ENCODE measurements at regions of chr14 and their contacts with region 1.

Region 1: DNA sequence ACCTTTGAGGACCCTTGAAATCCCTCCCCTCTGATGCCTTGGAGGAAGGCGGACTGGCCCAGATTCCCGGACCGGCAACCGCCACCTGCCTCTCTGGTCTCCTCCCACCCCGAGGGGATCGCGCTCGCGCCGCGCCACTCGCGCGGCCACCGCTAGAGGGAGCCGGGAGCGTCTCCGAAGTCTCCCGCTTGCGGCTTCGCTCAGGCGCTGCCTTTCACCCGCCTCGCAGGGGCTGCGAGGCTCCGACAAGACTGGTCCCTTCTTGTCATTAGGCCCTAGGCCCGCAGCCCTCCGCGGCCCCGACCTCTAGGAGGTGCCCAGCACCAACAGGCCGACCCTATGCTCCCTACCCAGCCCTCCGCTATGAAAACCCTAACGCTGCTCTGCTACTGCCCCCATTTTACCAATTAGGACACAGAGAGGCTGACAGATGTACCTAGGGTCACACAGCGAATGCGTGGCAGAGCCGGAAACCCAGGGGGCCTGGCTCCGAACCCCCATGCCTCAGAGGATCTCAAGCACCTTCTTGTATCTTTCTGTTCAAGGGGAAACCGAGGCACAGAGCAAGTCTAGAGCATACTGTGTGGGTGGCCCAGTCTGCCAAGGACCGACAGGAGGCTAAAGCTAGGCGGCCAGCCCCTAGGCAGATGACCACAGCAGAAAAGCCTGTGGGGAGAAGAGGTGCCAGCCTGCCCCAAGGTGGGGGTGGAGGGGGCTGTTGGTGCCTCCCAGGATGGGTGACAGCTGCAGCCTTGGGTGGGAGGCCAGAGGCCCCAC is 21.4 kb upstream of the VSX2 start:
- DNase-seq: peak; percentile 65
- H3K4me3 ChIP-seq: no peak overlapping the region
- H3K27ac ChIP-seq: no peak overlapping the region
- H3K4me1 ChIP-seq: no peaks in the 10 kb centered on the region
- H3K27me3 ChIP-seq: peaks cover 10 to 17% of the 10 kb centered on the region in 2 experiments
- CTCF ChIP-seq: peak; percentile 95 to 100
- POLR2A ChIP-seq: no peak

Region 2: DNA sequence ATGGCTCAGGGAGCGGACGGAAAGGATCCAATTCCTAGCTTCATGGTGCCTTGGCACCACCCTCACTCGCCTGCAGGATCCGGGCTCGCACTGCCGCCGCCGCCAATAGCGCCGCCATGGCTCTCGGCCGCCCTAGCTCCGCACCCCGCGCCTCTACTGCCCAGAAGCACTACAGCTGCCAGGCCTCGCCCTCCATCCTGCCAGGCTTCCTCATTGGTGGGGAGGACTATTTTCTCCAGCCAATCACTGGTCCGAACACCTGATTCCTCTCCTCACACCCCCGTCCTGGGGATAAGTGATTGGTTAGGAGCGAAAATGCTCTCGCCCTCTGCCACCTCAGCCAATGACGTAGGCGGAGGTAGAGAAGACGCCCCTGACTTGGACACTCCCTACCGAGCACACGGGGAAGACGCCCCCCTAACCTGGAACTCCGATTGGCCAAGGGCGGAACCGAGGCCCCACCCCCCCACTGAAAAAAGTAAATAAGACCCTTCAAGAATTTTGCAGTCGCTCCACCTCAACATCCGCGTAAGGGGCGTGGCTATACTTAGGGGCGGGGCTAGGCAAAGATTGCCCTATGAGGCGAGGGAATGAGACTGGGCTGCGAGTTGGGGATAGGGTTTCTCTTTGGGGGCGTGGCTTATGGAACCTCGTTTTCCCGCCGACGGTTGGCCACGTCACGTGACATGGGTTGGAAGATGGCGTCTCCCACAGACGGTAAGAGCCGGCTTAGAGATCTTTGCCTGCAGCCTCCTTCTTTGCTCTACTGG is 133.4 kb before region 1 on chr14 and contains the starts of genes ALDH6A1 and LIN52:
- CTCF ChIA-PET with region 1: no interaction called
- POLR2A ChIA-PET with region 1: no interaction called
- dilution Hi-C with region 1: no loop called
- intact Hi-C with region 1: no loop called
- DNase-seq: peak; percentile 100
- H3K4me3 ChIP-seq: peak within 1 kb of the TSS; percentile 34 to 87 (median 73)
- H3K27ac ChIP-seq: peak within 1 kb of the TSS; percentile 57
- H3K4me1 ChIP-seq: peaks cover 33% of the 10 kb centered on the region
- H3K27me3 ChIP-seq: no peaks in the 10 kb centered on the region
- CTCF ChIP-seq: peak in 1 of 2 donors; percentile 25
- POLR2A ChIP-seq: peak; percentile 55
- total RNA-seq, gene ALDH6A1: 7.3 and 10.2 TPM in 2 replicates
- total RNA-seq, gene LIN52: 9.7 and 10.5 TPM in 2 replicates

Region 3: DNA sequence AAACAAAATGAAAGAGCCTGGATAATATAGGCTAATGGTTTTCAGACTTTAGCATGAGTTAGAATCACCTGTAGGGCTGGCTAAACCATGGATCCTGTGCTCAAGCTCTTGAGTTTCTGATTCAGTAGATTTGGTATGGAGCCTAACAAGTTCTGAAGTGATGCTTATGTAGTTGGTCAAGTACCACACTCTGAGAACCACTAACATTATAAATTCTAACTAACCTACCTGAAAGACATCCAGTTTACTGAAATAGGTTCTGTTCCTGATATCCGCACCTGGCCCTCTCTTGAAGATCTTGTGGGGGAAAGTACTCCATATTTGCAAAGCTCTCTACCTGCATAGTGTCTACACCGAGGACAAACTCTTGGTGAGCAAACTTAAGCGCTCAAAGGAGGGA is 38.0 kb before region 1 on chr14:
- CTCF ChIA-PET with region 1: interaction called, 7 read pairs
- POLR2A ChIA-PET with region 1: no interaction called
- dilution Hi-C with region 1: no loop called
- intact Hi-C with region 1: loop called (anchors 1 kb)
- DNase-seq: no peak
- H3K4me3 ChIP-seq: no peak overlapping the region
- H3K27ac ChIP-seq: no peak overlapping the region
- H3K4me1 ChIP-seq: no peaks in the 10 kb centered on the region
- H3K27me3 ChIP-seq: no peaks in the 10 kb centered on the region
- CTCF ChIP-seq: no peak
- POLR2A ChIP-seq: no peak

Region 4: DNA sequence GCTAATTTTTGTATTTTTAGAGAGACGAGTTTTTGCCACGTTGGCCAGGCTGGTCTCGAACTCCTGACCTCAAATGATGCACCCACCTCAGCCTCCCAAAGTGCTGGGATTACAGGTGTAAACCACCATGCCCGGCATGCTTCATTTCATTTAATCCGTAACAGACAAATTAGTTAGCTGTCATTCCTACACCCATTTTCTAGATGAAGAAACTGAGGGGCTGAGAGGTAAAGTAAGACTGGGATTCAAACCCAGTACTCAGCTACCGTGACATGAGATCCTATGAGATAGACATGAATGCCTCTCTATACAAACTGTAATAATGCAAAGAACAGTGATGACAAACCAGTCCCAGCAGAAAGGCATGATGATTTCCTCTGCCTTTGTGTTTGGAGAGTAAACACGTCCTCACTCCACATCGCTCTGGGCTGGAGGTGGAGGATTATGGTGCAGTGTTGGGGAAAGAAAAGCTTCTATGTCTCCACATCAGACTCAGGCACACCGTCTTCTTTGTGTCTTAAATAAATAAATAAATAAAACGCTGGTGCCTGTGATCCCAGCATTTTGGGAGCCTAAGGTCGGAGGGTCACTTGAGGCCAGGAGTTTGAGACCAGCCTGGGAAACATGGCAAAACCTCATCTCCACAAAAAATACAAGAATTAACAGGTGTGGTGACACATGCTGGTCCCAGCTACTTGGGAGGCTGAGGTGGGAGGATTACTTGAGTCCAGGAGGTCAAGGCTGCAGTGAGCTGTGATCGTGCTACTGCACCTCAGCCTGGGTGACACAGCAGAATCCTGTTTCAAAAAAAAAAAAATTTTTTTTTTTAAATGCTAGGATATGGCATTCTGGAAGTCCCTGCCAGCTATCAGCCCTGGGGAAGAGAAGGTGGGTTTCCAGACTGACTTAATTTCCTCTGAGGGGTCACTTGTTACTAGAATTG is 31.8 kb after region 1 on chr14:
- CTCF ChIA-PET with region 1: interaction called, 11 read pairs
- POLR2A ChIA-PET with region 1: no interaction called
- dilution Hi-C with region 1: no loop called
- intact Hi-C with region 1: loop called (anchors 1 kb)
- DNase-seq: no peak
- H3K4me3 ChIP-seq: no peak overlapping the region
- H3K27ac ChIP-seq: no peak overlapping the region
- H3K4me1 ChIP-seq: no peaks in the 10 kb centered on the region
- H3K27me3 ChIP-seq: peaks cover 5 to 22% of the 10 kb centered on the region in 2 experiments
- CTCF ChIP-seq: no peak
- POLR2A ChIP-seq: no peak

Region 5: GRCh38 chr14:74531467-74531866 is 313.6 kb after region 1 on chr14:
- CTCF ChIA-PET with region 1: no interaction called
- POLR2A ChIA-PET with region 1: no interaction called
- dilution Hi-C with region 1: no loop called
- intact Hi-C with region 1: no loop called
- DNase-seq: peak; percentile 13
- H3K4me3 ChIP-seq: no peak overlapping the region
- H3K27ac ChIP-seq: no peak overlapping the region
- H3K4me1 ChIP-seq: no peaks in the 10 kb centered on the region
- H3K27me3 ChIP-seq: no peaks in the 10 kb centered on the region
- CTCF ChIP-seq: peak in 1 of 2 donors; percentile 14
- POLR2A ChIP-seq: no peak

Measured in endothelial cell of umbilical vein (primary cell).